CD14-positive monocyte (primary cell): ENCODE measurements at regions of chr14 and their contacts with region 1.

Region 1: GRCh38 chr14:33839193-33840076 is 111.4 kb downstream of the EGLN3 start:
- DNase-seq: peak; percentile 5 to 27 (median 16)
- H3K4me3 ChIP-seq: no peak overlapping the region
- H3K4me3 Mint-ChIP-seq: no peak overlapping the region
- H3K27ac ChIP-seq: no peak overlapping the region
- H3K27ac Mint-ChIP-seq: no peak overlapping the region
- H3K4me1 ChIP-seq: no peaks in the 10 kb centered on the region
- H3K4me1 Mint-ChIP-seq: no peaks in the 10 kb centered on the region
- H3K27me3 ChIP-seq: no peaks in the 10 kb centered on the region
- H3K27me3 Mint-ChIP-seq: peaks cover 0 to 4% (median 0%) of the 10 kb centered on the region in 3 donors
- CTCF ChIP-seq: peak; percentile 85

Region 2: GRCh38 chr14:33737446-33737845 is 102.0 kb before region 1 on chr14:
- intact Hi-C with region 1: no loop called
- DNase-seq: no peak
- H3K4me3 ChIP-seq: no peak overlapping the region
- H3K4me3 Mint-ChIP-seq: no peak overlapping the region
- H3K27ac ChIP-seq: no peak overlapping the region
- H3K27ac Mint-ChIP-seq: no peak overlapping the region
- H3K4me1 ChIP-seq: no peaks in the 10 kb centered on the region
- H3K4me1 Mint-ChIP-seq: no peaks in the 10 kb centered on the region
- H3K27me3 ChIP-seq: no peaks in the 10 kb centered on the region
- H3K27me3 Mint-ChIP-seq: peaks cover 0 to 2% (median 1%) of the 10 kb centered on the region in 3 donors
- CTCF ChIP-seq: no peak

Region 3: GRCh38 chr14:34099635-34100034 is 260.2 kb after region 1 on chr14:
- intact Hi-C with region 1: loop called (anchors 10 kb)
- DNase-seq: no peak
- H3K4me3 ChIP-seq: no peak overlapping the region
- H3K4me3 Mint-ChIP-seq: no peak overlapping the region
- H3K27ac ChIP-seq: no peak overlapping the region
- H3K27ac Mint-ChIP-seq: peak overlapping the region in 1 of 7 donors; percentile 31
- H3K4me1 ChIP-seq: no peaks in the 10 kb centered on the region
- H3K4me1 Mint-ChIP-seq: no peaks in the 10 kb centered on the region
- H3K27me3 ChIP-seq: no peaks in the 10 kb centered on the region
- H3K27me3 Mint-ChIP-seq: peaks cover 1 to 3% (median 2%) of the 10 kb centered on the region in 3 donors
- CTCF ChIP-seq: no peak

Region 4: GRCh38 chr14:34227834-34228649 is 388.6 kb after region 1 on chr14:
- intact Hi-C with region 1: loop called (anchors 5 kb)
- DNase-seq: peak in 2 of 3 donors; percentile 9 to 23
- H3K4me3 ChIP-seq: no peak overlapping the region
- H3K4me3 Mint-ChIP-seq: no peak overlapping the region
- H3K27ac ChIP-seq: no peak overlapping the region
- H3K27ac Mint-ChIP-seq: peak overlapping the region in 1 of 7 donors; percentile 2
- H3K4me1 ChIP-seq: no peaks in the 10 kb centered on the region
- H3K4me1 Mint-ChIP-seq: no peaks in the 10 kb centered on the region
- H3K27me3 ChIP-seq: peaks cover 0 to 6% of the 10 kb centered on the region in 2 donors
- H3K27me3 Mint-ChIP-seq: peaks cover 2 to 14% (median 11%) of the 10 kb centered on the region in 3 donors
- CTCF ChIP-seq: peak; percentile 65

Region 5: GRCh38 chr14:34322940-34323418 is 483.5 kb after region 1 on chr14:
- intact Hi-C with region 1: loop called in 1 of 2 experiments (anchors 10 kb)
- DNase-seq: peak; percentile 44 to 71 (median 44)
- H3K4me3 ChIP-seq: no peak overlapping the region
- H3K4me3 Mint-ChIP-seq: no peak overlapping the region
- H3K27ac ChIP-seq: no peak overlapping the region
- H3K27ac Mint-ChIP-seq: no peak overlapping the region
- H3K4me1 ChIP-seq: no peaks in the 10 kb centered on the region
- H3K4me1 Mint-ChIP-seq: peaks cover 4% of the 10 kb centered on the region
- H3K27me3 ChIP-seq: no peaks in the 10 kb centered on the region
- H3K27me3 Mint-ChIP-seq: peaks cover 2 to 6% (median 4%) of the 10 kb centered on the region in 3 donors
- CTCF ChIP-seq: peak; percentile 86